ENCODE measurements at regions of chr1 and their contacts with region 1.

Region 1: GRCh38 chr1:50348449-50349241 is 74.6 kb downstream of the DMRTA2 start:
- DNase-seq: peak; percentile 86
- H3K4me3 Mint-ChIP-seq: no peak overlapping the region
- H3K27ac Mint-ChIP-seq: no peak overlapping the region
- H3K4me1 Mint-ChIP-seq: no peaks in the 10 kb centered on the region
- H3K27me3 Mint-ChIP-seq: peaks cover 14% of the 10 kb centered on the region
- CTCF ChIP-seq: peak; percentile 85

Region 2: GRCh38 chr1:48817505-48818114 is 1531.0 kb before region 1 on chr1:
- CTCF ChIA-PET with region 1: interaction called, 4 read pairs
- POLR2A ChIA-PET with region 1: no interaction called
- intact Hi-C with region 1: loop called (anchors 5 kb)
- DNase-seq: peak; percentile 72
- H3K4me3 Mint-ChIP-seq: no peak overlapping the region
- H3K27ac Mint-ChIP-seq: no peak overlapping the region
- H3K4me1 Mint-ChIP-seq: no peaks in the 10 kb centered on the region
- H3K27me3 Mint-ChIP-seq: no peaks in the 10 kb centered on the region
- CTCF ChIP-seq: peak; percentile 62

Region 3: GRCh38 chr1:49102752-49103151 is 1245.9 kb before region 1 on chr1:
- CTCF ChIA-PET with region 1: interaction called, 3 read pairs
- POLR2A ChIA-PET with region 1: no interaction called
- intact Hi-C with region 1: loop called (anchors 10 kb)
- DNase-seq: no peak
- H3K4me3 Mint-ChIP-seq: no peak overlapping the region
- H3K27ac Mint-ChIP-seq: no peak overlapping the region
- H3K4me1 Mint-ChIP-seq: no peaks in the 10 kb centered on the region
- H3K27me3 Mint-ChIP-seq: no peaks in the 10 kb centered on the region
- CTCF ChIP-seq: no peak

Region 4: DNA sequence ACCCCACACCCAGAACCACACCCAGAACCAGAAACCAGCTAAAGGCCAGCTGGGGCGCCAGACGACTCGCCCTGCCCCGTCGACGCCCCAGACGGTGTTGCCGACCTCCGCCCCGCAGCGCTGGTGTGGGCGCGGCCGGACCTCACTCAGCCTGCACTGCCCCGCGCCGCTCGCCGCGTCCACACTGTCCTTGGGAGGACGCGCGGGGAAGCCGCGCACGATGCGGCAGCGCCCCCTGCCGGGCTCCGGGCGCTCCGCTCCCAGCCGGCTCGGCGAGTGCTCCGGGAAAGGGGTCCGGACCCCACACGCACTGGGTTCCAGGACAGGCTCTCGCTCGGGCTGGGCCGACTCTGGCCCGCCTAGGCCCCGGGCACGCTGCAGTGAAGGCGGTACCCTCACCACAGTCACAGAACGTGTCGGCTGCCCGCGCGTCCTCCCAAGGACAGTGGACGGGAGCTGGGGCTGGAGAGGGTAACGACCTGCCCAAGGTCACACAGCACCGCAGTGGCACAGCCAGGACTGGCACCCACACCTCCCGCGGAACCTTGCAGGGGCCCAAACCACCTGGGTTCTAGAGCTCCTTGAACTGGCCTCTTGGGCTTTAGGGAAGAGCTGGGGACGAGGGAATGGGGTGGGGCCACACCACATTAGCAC is 15.6 kb before region 1 on chr1:
- CTCF ChIA-PET with region 1: interaction called, 28 read pairs
- POLR2A ChIA-PET with region 1: no interaction called
- intact Hi-C with region 1: no loop called
- DNase-seq: peak; percentile 40
- H3K4me3 Mint-ChIP-seq: peak overlapping the region; percentile 49
- H3K27ac Mint-ChIP-seq: no peak overlapping the region
- H3K4me1 Mint-ChIP-seq: no peaks in the 10 kb centered on the region
- H3K27me3 Mint-ChIP-seq: peaks cover 58% of the 10 kb centered on the region
- CTCF ChIP-seq: peak; percentile 59

Region 5: GRCh38 chr1:50570066-50570468 is 221.4 kb after region 1 on chr1:
- CTCF ChIA-PET with region 1: no interaction called
- POLR2A ChIA-PET with region 1: no interaction called
- intact Hi-C with region 1: no loop called
- DNase-seq: no peak
- H3K4me3 Mint-ChIP-seq: no peak overlapping the region
- H3K27ac Mint-ChIP-seq: no peak overlapping the region
- H3K4me1 Mint-ChIP-seq: no peaks in the 10 kb centered on the region
- H3K27me3 Mint-ChIP-seq: no peaks in the 10 kb centered on the region
- CTCF ChIP-seq: no peak

Region 6: GRCh38 chr1:50582346-50582745 is 233.7 kb after region 1 on chr1:
- CTCF ChIA-PET with region 1: no interaction called
- POLR2A ChIA-PET with region 1: no interaction called
- intact Hi-C with region 1: no loop called
- DNase-seq: no peak
- H3K4me3 Mint-ChIP-seq: no peak overlapping the region
- H3K27ac Mint-ChIP-seq: no peak overlapping the region
- H3K4me1 Mint-ChIP-seq: no peaks in the 10 kb centered on the region
- H3K27me3 Mint-ChIP-seq: no peaks in the 10 kb centered on the region
- CTCF ChIP-seq: no peak

Measured in MCF 10A (cell line).